Panc1 (cell line): ENCODE measurements at regions of chr16 and their contacts with region 1.

Region 1: DNA sequence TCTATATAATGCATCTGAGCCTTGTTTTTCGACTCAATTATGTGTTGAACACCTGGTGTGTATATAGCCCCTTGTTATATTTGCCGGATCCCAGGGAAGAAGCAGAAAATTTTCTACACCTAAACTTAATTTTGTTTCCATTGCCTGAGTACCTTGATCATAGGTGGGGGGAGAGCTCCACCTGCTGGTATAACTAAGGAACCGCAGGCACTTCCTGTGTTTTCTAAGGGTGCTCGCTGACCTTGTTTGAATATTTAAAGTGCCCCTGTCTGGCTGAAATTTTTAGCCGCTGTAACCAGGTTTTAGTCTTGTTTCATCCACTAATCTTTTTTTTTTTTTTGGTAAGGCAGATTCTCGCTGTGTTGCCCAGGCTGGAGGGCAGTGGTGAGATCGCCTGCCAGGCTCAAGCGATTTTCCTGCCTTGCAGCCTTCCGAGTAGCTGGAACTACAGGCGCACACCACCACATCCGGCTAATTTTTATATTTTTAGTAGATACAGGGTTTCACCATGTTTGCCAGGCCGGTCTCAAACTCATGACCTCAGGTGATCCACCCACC is 6.5 kb upstream of the NUBP1 start:
- DNase-seq: peak; percentile 68
- ATAC-seq: peak; percentile 77
- H3K4me3 ChIP-seq: peak overlapping the region; percentile 45 to 69
- H3K27ac ChIP-seq: peak overlapping the region; percentile 75
- H3K4me1 ChIP-seq: peaks cover 15% of the 10 kb centered on the region
- H3K27me3 ChIP-seq: no peaks in the 10 kb centered on the region
- CTCF ChIP-seq: peak; percentile 91

Region 2: DNA sequence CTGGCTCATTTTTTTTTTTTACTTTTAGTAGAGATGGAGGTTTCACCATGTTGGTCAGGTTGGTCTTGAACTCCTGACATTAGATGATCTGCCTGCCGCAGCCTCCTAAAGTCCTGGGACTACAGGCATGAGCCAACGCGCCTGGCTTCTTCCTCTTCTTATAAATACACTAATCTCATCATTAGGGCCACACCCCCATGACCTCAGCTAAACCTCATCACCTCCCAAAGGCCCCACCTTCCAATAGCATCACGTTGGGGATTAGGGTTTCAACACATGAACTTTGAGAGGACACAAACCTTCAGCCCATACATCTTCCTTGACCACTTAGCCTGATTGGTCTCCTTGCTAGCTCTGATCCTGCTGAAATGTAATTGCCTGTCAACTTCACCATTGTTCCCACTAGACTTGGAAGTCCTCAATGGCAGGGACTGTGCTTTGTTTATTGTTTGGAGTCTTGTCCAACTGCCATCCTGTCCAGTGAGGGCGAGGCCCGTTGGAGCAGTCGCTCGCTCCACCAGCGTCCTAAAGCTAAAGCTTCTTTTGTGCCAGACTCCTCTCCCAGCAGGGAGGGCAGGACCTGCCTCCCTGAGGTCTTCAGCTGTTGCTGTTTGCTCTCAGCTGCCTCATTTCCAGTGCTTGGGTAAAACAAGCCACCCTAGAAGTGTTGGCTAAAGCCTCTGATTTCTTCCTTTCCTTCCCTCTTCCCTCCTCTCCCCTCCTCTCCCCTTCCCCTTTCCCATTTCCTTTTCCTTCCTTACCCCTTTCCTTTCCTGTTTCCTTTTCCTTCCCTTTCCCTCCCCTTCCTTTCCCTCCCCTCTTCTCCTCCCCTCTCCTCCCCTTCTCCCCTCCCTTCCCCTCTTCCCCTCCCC is 1560.4 kb before region 1 on chr16:
- CTCF ChIA-PET with region 1: no interaction called
- POLR2A ChIA-PET with region 1: interaction called, 11 read pairs
- in situ Hi-C with region 1: no loop called
- intact Hi-C with region 1: no loop called
- DNase-seq: no peak
- ATAC-seq: peak; percentile 57; the same call in 1 of the 2 replicates
- H3K4me3 ChIP-seq: no peak overlapping the region
- H3K27ac ChIP-seq: no peak overlapping the region
- H3K4me1 ChIP-seq: no peaks in the 10 kb centered on the region
- H3K27me3 ChIP-seq: no peaks in the 10 kb centered on the region
- CTCF ChIP-seq: no peak

Region 3: GRCh38 chr16:10314811-10315210 is 422.3 kb before region 1 on chr16:
- CTCF ChIA-PET with region 1: interaction called, 12 read pairs
- POLR2A ChIA-PET with region 1: no interaction called
- in situ Hi-C with region 1: no loop called
- intact Hi-C with region 1: loop called (anchors 10 kb)
- DNase-seq: no peak
- ATAC-seq: no peak; the same call in 1 of the 2 replicates
- H3K4me3 ChIP-seq: no peak overlapping the region
- H3K27ac ChIP-seq: no peak overlapping the region
- H3K4me1 ChIP-seq: no peaks in the 10 kb centered on the region
- H3K27me3 ChIP-seq: no peaks in the 10 kb centered on the region
- CTCF ChIP-seq: no peak; the same call in 1 of the 2 replicates

Region 4: DNA sequence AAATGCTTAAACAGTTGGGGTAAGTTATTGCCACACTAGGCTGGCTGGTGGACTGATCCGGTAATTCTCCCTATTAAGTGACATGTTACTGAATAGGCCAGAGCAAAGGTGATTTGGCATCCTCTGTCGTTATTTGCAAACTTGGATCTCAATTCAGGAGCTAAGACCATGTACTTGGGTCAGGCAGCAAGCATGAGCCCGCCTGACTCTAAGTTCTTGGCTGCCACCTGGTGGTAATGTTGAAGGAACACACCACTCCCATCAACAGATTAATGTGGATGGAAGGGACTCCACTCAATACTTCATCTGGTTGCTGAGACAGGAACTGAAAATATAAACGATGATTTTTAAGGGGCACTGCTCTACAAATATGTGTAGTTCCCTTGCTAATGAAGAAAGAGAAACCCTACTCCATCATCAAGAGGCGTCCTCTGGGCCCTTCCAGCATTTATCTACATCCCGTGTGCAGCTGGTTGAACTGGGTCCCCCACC is 227.6 kb before region 1 on chr16:
- CTCF ChIA-PET with region 1: interaction called, 13 read pairs
- POLR2A ChIA-PET with region 1: no interaction called
- in situ Hi-C with region 1: no loop called
- intact Hi-C with region 1: loop called (anchors 1 kb)
- DNase-seq: peak; percentile 62
- ATAC-seq: peak; percentile 99
- H3K4me3 ChIP-seq: no peak overlapping the region
- H3K27ac ChIP-seq: no peak overlapping the region
- H3K4me1 ChIP-seq: no peaks in the 10 kb centered on the region
- H3K27me3 ChIP-seq: no peaks in the 10 kb centered on the region
- CTCF ChIP-seq: peak; percentile 85

Region 5: DNA sequence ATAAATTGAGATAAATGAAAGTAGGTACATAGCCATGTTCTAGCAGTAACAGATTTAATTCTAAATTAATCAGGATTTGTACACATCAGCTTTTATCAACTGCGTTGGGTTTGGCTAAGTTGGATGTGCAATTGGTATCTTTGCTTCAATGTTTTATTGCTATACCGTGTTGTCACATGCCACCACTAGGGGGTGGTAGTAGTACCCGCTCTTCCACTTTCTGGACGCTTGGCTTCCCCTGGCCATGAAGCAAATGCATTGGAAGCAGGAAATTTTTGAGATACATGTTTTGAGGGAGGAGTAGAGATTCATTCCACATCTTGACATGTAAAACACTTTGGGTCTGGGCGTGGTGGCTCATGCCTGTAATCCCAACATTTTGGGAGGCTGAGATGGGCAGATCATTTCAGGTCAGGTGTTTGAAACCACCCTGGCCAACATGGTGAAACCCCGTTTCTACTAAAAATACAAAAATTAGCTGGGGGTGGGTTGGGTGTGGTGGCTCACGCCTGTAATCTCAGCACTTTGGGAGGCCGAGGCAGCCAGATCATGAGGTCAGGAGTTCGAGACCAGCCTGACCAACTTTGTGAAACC is 215.4 kb before region 1 on chr16:
- CTCF ChIA-PET with region 1: interaction called, 11 read pairs
- POLR2A ChIA-PET with region 1: interaction called, 9 read pairs
- in situ Hi-C with region 1: no loop called
- intact Hi-C with region 1: no loop called
- DNase-seq: peak; percentile 52
- ATAC-seq: peak; percentile 88
- H3K4me3 ChIP-seq: no peak overlapping the region
- H3K27ac ChIP-seq: no peak overlapping the region
- H3K4me1 ChIP-seq: no peaks in the 10 kb centered on the region
- H3K27me3 ChIP-seq: no peaks in the 10 kb centered on the region
- CTCF ChIP-seq: peak; percentile 90

Region 6: DNA sequence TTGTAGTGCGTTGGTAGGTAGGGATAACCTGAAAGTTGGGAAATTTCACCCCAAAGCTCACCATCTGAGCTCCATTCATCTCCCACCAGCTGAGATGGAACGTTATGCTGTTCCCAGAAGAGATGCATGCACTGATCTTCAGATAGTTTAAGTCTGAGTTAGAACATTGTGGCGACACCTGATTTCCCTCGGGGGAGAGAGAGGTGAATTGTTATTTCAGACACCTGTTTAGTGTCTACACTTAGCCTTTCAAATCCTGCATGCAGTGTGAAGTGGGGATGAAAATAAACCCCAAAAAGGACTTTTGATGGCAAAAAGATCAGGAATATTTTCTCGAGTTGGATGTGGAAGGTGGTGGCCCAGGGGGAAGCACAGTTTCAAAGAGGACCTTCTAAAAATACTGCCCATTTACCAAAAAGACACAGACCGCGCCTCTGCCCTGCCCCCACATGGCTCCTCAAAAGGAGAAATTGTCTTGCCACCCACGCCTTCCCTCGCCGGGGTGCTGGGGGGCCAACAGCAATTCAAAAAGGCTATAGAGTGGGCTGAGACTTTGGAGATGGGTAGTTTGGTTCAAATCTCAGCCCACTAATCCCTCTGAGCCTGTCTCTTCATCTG is 151.3 kb after region 1 on chr16:
- CTCF ChIA-PET with region 1: no interaction called
- POLR2A ChIA-PET with region 1: no interaction called
- in situ Hi-C with region 1: no loop called
- intact Hi-C with region 1: no loop called
- DNase-seq: no peak
- ATAC-seq: no peak
- H3K4me3 ChIP-seq: no peak overlapping the region
- H3K27ac ChIP-seq: no peak overlapping the region
- H3K4me1 ChIP-seq: no peaks in the 10 kb centered on the region
- H3K27me3 ChIP-seq: peaks cover 2% of the 10 kb centered on the region; the same call in 1 of the 2 replicates
- CTCF ChIP-seq: no peak

Region 7: GRCh38 chr16:10918294-10919002 is 181.3 kb after region 1 on chr16:
- CTCF ChIA-PET with region 1: interaction called, 8 read pairs
- POLR2A ChIA-PET with region 1: no interaction called
- in situ Hi-C with region 1: no loop called
- intact Hi-C with region 1: loop called (anchors 5 kb)
- DNase-seq: peak; percentile 94
- ATAC-seq: peak; percentile 94
- H3K4me3 ChIP-seq: no peak overlapping the region
- H3K27ac ChIP-seq: no peak overlapping the region
- H3K4me1 ChIP-seq: peaks cover 4% of the 10 kb centered on the region; the same call in 1 of the 2 replicates
- H3K27me3 ChIP-seq: no peaks in the 10 kb centered on the region
- CTCF ChIP-seq: peak; percentile 97

Region 8: GRCh38 chr16:10979717-10980601 is 242.8 kb after region 1 on chr16:
- CTCF ChIA-PET with region 1: no interaction called
- POLR2A ChIA-PET with region 1: no interaction called
- in situ Hi-C with region 1: no loop called
- intact Hi-C with region 1: no loop called
- DNase-seq: no peak
- ATAC-seq: no peak
- H3K4me3 ChIP-seq: no peak overlapping the region
- H3K27ac ChIP-seq: no peak overlapping the region
- H3K4me1 ChIP-seq: no peaks in the 10 kb centered on the region
- H3K27me3 ChIP-seq: no peaks in the 10 kb centered on the region
- CTCF ChIP-seq: no peak